ENCODE measurements at regions of chr19 and their contacts with region 1.

Region 1: GRCh38 chr19:48321622-48322591 is 3.4 kb upstream of the EMP3 start:
- DNase-seq: peak; percentile 99
- H3K4me3 Mint-ChIP-seq: peak overlapping the region; percentile 95
- H3K27ac Mint-ChIP-seq: peak overlapping the region; percentile 97
- H3K4me1 Mint-ChIP-seq: peaks cover 43% of the 10 kb centered on the region
- H3K27me3 Mint-ChIP-seq: no peaks in the 10 kb centered on the region
- CTCF ChIP-seq: no peak

Region 2: GRCh38 chr19:48363810-48364563 is 42.1 kb after region 1 on chr19 and contains the starts of genes SYNGR4 and TMEM143:
- CTCF ChIA-PET with region 1: interaction called, 3 read pairs
- POLR2A ChIA-PET with region 1: interaction called, 20 read pairs
- intact Hi-C with region 1: no loop called
- DNase-seq: peak; percentile 100
- H3K4me3 Mint-ChIP-seq: peak within 1 kb of the TSS; percentile 79
- H3K27ac Mint-ChIP-seq: peak within 1 kb of the TSS; percentile 88
- H3K4me1 Mint-ChIP-seq: no peaks in the 10 kb centered on the region
- H3K27me3 Mint-ChIP-seq: no peaks in the 10 kb centered on the region
- CTCF ChIP-seq: no peak
- total RNA-seq, gene SYNGR4: not detected in 2 replicates
- total RNA-seq, gene TMEM143: 6.0 and 7.6 TPM in 2 replicates